ENCODE measurements at regions of chr11 and their contacts with region 1.

Region 1: GRCh38 chr11:67507864-67508485 is at the start of gene CDK2AP2:
- DNase-seq: peak; percentile 99
- H3K4me3 Mint-ChIP-seq: peak within 1 kb of the TSS; percentile 85
- H3K27ac Mint-ChIP-seq: peak within 1 kb of the TSS; percentile 97
- H3K4me1 Mint-ChIP-seq: peaks cover 35% of the 10 kb centered on the region
- H3K27me3 Mint-ChIP-seq: no peaks in the 10 kb centered on the region
- total RNA-seq, gene CDK2AP2: 53.7 to 55.1 TPM

Region 2: DNA sequence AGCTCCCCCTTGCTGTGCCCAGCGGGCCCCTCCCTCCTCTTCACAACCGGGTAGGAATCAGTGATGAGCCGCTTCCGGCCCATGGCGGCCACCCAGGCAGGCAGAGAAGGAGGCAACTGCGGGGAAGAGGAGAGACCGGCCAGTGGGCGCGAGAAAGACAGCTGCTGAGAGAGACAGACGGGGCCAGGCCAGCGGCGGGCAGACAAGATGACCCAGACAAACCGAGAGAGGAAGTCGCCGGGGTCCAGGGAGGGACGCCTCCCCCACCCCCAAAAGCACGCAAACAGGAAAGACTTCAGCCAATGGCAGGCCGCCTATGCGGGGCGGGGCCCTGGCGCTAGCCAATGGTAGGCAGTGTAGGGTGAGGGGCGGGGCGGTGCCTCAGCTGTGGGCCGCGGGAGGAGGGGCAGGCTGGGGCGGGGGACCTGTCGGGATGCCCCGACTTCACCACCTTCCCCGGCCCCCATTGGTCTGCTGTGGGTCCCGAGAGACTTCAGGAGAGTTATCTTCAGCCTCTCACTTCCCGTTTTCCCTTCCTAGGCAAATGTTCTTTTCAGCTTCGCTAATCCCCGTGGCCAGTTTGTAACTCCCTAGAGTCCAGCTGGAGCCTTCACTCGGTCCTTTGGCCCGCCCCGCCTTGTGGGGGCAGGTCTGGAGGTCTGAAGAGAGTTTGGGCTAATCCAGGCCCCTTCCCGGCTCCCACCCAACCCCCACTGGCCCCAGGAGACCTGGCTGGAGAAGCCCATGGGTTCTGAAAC is 154.5 kb before region 1 on chr11 and contains the start of gene POLD4:
- CTCF ChIA-PET with region 1: no interaction called
- intact Hi-C with region 1: loop called (anchors 1 kb)
- DNase-seq: peak; percentile 97
- H3K4me3 Mint-ChIP-seq: peak within 1 kb of the TSS; percentile 92
- H3K27ac Mint-ChIP-seq: peak within 1 kb of the TSS; percentile 97
- H3K4me1 Mint-ChIP-seq: peaks cover 54% of the 10 kb centered on the region
- H3K27me3 Mint-ChIP-seq: no peaks in the 10 kb centered on the region
- total RNA-seq, gene POLD4: 40.7 to 42.0 TPM

Region 3: DNA sequence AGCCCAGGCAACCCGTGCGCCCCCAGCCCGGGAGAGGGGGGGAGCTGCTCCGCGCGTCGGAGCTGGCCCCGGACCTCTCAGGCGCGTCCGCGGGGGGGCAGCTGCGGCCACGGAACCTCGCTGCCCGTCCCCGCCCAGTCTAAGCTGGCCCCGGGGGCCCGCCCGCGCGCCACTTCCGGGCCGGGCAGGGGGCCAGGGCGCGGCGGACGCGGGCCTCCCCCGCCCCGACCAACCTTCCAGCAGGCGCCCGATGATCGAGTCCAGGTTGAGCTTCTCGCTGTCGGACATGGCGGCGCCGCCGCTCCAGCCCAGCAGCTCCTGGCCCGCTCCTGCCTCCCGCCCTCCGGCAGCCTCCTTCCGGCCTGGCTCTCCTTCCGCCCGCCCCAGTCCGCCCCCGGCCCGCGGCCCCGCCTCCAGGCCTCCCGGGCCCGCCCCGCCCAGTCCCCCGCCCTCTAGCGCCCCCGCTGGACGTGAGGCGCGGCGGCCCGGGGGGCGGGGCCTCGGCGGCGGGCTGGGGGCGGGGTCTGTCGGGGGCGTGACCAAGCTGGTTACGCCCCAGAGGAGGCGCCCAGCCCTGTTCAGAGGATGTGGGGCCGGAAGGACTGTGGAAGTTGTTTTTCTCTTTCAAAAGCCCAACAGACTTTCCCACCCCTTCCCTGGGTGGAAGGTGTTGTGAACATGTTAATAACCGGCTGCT is 106.3 kb before region 1 on chr11 and contains the start of gene PPP1CA:
- CTCF ChIA-PET with region 1: interaction called, 6 read pairs
- intact Hi-C with region 1: loop called (anchors 1 kb)
- DNase-seq: peak; percentile 91
- H3K4me3 Mint-ChIP-seq: peak within 1 kb of the TSS; percentile 72
- H3K27ac Mint-ChIP-seq: peak within 1 kb of the TSS; percentile 92
- H3K4me1 Mint-ChIP-seq: peaks cover 60% of the 10 kb centered on the region
- H3K27me3 Mint-ChIP-seq: no peaks in the 10 kb centered on the region
- total RNA-seq, gene PPP1CA: 202 to 204 TPM

Region 4: DNA sequence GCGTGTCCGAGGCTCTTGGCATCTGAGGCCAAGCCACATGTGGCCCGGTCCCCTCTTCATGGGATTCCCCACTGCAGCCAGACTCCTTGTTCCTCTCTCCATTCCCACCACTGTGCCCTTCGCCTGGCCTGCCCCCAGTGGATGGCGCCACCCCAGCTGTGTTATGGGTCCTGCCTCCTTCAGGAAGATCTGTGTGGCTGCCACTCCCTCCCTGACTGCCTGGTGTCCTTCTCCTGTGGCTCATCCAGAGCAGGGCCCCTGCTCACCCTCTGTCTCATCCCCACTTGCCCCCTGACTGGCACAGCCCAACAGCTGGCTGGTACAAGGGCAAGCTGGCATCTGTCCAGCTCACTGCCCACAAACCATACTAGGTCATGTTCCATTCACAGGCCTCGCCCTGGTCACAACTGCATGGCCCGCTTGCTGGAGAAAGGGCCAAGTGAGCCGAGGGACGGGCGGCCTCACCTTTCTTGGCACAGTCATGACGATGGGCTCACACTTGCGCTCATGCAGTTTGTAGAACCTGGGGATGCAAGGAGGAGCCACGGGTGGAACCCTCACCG is 68.6 kb before region 1 on chr11:
- CTCF ChIA-PET with region 1: interaction called, 7 read pairs
- intact Hi-C with region 1: loop called (anchors 1 kb)
- DNase-seq: peak; percentile 77
- H3K4me3 Mint-ChIP-seq: peak overlapping the region; percentile 90
- H3K27ac Mint-ChIP-seq: peak overlapping the region; percentile 95
- H3K4me1 Mint-ChIP-seq: peaks cover 55% of the 10 kb centered on the region
- H3K27me3 Mint-ChIP-seq: no peaks in the 10 kb centered on the region

Region 5: GRCh38 chr11:67482825-67483798 is 24.9 kb before region 1 on chr11 and contains the start of gene AIP:
- CTCF ChIA-PET with region 1: interaction called, 6 read pairs
- intact Hi-C with region 1: loop called (anchors 1 kb)
- DNase-seq: peak; percentile 99
- H3K4me3 Mint-ChIP-seq: peak within 1 kb of the TSS; percentile 94
- H3K27ac Mint-ChIP-seq: peak within 1 kb of the TSS; percentile 99
- H3K4me1 Mint-ChIP-seq: peaks cover 34% of the 10 kb centered on the region
- H3K27me3 Mint-ChIP-seq: no peaks in the 10 kb centered on the region
- total RNA-seq, gene AIP: 163 to 166 TPM

Region 6: GRCh38 chr11:67494371-67495287 is 13.3 kb before region 1 on chr11:
- CTCF ChIA-PET with region 1: no interaction called
- intact Hi-C with region 1: no loop called
- DNase-seq: no peak
- H3K4me3 Mint-ChIP-seq: no peak overlapping the region
- H3K27ac Mint-ChIP-seq: no peak overlapping the region
- H3K4me1 Mint-ChIP-seq: peaks cover 5% of the 10 kb centered on the region
- H3K27me3 Mint-ChIP-seq: no peaks in the 10 kb centered on the region

Region 7: GRCh38 chr11:67606492-67607201 is 98.7 kb after region 1 on chr11 and contains the start of gene NDUFV1:
- CTCF ChIA-PET with region 1: no interaction called
- intact Hi-C with region 1: loop called (anchors 1 kb)
- DNase-seq: peak; percentile 97
- H3K4me3 Mint-ChIP-seq: peak within 1 kb of the TSS; percentile 90
- H3K27ac Mint-ChIP-seq: peak within 1 kb of the TSS; percentile 85
- H3K4me1 Mint-ChIP-seq: peaks cover 17% of the 10 kb centered on the region
- H3K27me3 Mint-ChIP-seq: peaks cover 6% of the 10 kb centered on the region
- total RNA-seq, gene NDUFV1: 347 to 356 TPM